Activated CD4-positive, alpha-beta T cell treated with anti-CD3 and anti-CD28 coated beads, Interleukin-2, amount 10 ng/mL, durations not matched to agents 24 days and 14 days (primary cell): ENCODE measurements at regions of chr15 and their contacts with region 1.

Region 1: DNA sequence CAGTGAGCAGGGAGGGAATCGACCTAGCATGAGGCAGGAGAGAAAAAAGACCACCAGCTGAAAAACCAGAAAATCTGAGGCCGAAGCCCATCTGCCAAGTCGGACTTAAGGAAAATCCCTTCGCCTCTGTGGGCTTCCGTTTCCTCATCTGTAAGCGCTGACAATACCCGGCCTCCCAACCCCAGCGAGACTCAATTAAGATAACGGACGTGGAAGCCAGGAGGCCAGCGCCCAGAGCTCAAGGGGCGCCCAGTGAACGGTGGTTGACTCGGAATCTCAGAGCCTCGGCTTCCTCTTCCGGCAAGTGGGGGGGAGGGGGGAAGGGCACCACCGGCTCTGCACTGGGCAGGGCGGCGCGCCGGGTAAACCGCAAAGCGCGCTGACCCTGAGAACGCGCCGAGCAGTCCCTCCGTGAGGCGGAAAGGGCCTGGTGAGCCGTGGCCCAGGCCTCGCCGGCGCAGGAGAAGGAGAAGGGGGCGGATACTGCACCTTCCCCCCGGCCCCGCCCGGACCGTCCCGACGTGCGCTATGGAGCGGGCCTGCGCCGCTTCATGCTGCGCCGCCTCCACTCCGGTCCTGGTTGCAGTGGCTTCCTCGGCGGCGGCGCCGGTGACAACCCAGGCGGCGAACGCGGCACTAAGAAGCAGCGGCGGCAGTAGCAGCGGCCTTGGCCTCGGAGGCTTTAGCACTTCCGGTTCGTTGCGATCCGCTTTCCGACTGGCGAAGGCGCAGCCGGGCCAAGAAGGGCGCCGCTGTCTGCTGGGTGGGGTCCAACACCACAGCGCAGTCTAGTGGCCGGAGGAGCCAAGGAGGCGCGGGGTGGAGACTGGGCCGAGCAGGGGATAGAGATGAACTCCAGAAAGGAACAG is at the start of gene DPP8:
- DNase-seq: peak; percentile 99
- H3K4me3 Mint-ChIP-seq: peak within 1 kb of the TSS; percentile 94
- H3K27ac Mint-ChIP-seq: peak within 1 kb of the TSS; percentile 96
- H3K4me1 Mint-ChIP-seq: peaks cover 21% of the 10 kb centered on the region
- H3K27me3 Mint-ChIP-seq: no peaks in the 10 kb centered on the region
- total RNA-seq, gene DPP8: 31.4 and 36.0 TPM in 2 replicates

Region 2: GRCh38 chr15:65460741-65461347 is 56.4 kb before region 1 on chr15:
- intact Hi-C with region 1: loop called (anchors 2 kb)
- DNase-seq: peak; percentile 65
- H3K4me3 Mint-ChIP-seq: no peak overlapping the region
- H3K27ac Mint-ChIP-seq: peak overlapping the region; percentile 2
- H3K4me1 Mint-ChIP-seq: peaks cover 7% of the 10 kb centered on the region
- H3K27me3 Mint-ChIP-seq: no peaks in the 10 kb centered on the region

Region 3: DNA sequence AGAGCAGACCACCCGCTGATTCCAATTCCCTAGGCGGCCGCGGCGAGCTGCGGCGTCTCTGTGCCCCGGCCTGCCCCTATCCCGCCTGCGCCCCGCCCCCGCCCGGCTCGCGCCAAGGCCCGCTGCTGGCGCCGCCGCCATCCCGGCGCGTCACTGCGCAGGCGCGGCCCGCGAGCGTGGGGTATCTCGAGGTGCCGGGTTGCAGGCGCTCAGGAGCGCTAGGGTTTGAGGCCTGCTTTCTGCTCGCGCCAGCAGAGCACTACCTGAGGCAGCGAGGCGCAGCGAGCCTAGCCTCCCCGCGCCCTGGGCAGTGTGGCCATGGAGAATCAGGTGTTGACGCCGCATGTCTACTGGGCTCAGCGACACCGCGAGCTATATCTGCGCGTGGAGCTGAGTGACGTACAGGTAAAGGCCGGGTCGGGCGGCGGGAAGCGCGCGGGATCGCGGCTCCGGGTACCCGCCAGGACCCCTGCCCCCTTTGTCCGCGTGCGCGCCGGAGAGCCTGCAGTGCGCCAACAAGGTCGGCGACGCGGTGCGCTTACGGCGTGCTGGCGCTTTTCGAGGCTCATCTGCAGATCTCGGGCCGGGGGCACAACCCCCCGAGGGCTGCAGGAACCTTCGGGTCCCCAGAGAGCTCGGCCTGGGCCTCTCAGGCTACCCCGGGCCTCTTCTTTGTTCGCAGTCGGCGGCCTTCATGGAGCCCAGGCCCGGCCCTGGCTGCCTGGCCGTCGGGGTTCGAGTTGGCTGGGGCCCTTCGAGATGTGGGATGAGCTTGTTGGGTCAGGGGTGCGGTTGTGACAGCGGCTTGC is 13.3 kb after region 1 on chr15 and contains the start of gene HACD3:
- intact Hi-C with region 1: loop called (anchors 1 kb)
- DNase-seq: peak; percentile 97
- H3K4me3 Mint-ChIP-seq: peak within 1 kb of the TSS; percentile 88
- H3K27ac Mint-ChIP-seq: peak within 1 kb of the TSS; percentile 87
- H3K4me1 Mint-ChIP-seq: peaks cover 31% of the 10 kb centered on the region
- H3K27me3 Mint-ChIP-seq: no peaks in the 10 kb centered on the region
- total RNA-seq, gene HACD3: 39.4 and 45.1 TPM in 2 replicates

Region 4: GRCh38 chr15:65610871-65611718 is 93.9 kb after region 1 on chr15 and contains the start of gene INTS14:
- intact Hi-C with region 1: loop called (anchors 1 kb)
- DNase-seq: peak; percentile 98
- H3K4me3 Mint-ChIP-seq: peak within 1 kb of the TSS; percentile 99
- H3K27ac Mint-ChIP-seq: peak within 1 kb of the TSS; percentile 96
- H3K4me1 Mint-ChIP-seq: peaks cover 28% of the 10 kb centered on the region
- H3K27me3 Mint-ChIP-seq: no peaks in the 10 kb centered on the region
- total RNA-seq, gene INTS14: 46.4 and 49.2 TPM in 2 replicates